ENCODE measurements at regions of chr19 and their contacts with region 1.

Region 1: GRCh38 chr19:32339988-32340874 is 5.2 kb upstream of the ZNF507 start:
- DNase-seq: peak; percentile 64
- H3K4me3 Mint-ChIP-seq: no peak overlapping the region
- H3K27ac Mint-ChIP-seq: no peak overlapping the region
- H3K4me1 Mint-ChIP-seq: no peaks in the 10 kb centered on the region
- H3K27me3 Mint-ChIP-seq: peaks cover 3% of the 10 kb centered on the region

Region 2: GRCh38 chr19:32570081-32570785 is 230.0 kb after region 1 on chr19:
- CTCF ChIA-PET with region 1: interaction called, 8 read pairs
- POLR2A ChIA-PET with region 1: no interaction called
- intact Hi-C with region 1: loop called (anchors 1 kb)
- DNase-seq: peak; percentile 63
- H3K4me3 Mint-ChIP-seq: no peak overlapping the region
- H3K27ac Mint-ChIP-seq: no peak overlapping the region
- H3K4me1 Mint-ChIP-seq: peaks cover 7% of the 10 kb centered on the region
- H3K27me3 Mint-ChIP-seq: peaks cover 19% of the 10 kb centered on the region

Measured in activated CD4-positive, alpha-beta memory T cell treated with anti-CD3 and anti-CD28 coated beads for 36 hours (primary cell).